ENCODE measurements at regions of chr14 and their contacts with region 1.

Region 1: DNA sequence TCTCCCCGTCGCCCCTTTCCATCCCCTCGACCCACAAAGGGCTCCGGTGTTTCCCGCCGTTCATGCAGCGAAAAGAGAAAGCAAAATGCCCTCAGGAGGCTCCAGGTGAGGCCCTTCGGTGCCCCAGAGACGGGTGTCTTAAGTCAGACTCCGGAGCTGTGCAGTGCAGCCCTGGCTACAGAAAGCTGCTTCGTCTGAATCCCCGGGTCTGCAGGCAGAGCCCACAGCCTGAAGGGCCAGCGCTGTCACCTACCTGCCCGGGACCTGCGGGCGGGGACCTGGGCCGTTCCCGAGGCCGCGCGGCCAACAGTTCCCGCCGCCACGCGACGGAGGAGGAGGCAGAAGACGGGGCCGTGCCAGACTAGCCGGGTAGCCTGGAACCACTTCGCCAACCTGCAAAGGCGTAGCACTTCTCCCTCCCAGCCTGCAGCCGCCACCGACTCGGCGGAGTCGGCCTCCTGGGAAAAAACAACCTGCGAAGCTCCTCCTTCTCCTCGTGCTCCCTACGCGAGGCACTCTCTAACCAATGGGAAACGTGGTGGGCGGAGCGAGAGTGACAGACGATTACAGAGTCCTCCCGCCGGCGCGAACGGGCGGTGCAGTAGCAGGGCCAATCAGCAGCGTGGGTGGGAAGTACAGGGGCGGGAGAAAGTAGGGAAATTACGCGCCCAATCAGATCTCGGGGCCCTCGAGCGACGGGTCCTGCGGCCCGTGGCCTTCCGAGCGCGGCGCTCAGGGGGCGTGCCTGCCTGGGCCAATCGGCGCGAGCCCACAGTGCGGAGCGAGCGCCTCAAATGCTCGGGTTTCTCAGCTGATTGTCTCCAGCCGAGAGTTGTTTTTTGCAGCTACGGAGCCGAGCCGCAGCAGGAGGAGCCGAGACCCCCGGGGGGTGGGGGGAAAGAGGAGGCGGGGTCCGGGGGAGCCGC is at the starts of genes GPR137C and TXNDC16:
- DNase-seq: peak; percentile 100
- H3K4me3 Mint-ChIP-seq: peak within 1 kb of the TSS; percentile 88
- H3K27ac Mint-ChIP-seq: peak within 1 kb of the TSS; percentile 77
- H3K4me1 Mint-ChIP-seq: peaks cover 15% of the 10 kb centered on the region
- H3K27me3 Mint-ChIP-seq: no peaks in the 10 kb centered on the region
- total RNA-seq, gene GPR137C: 0.07 TPM in 1 of 2 experiments, not detected in the other
- total RNA-seq, gene TXNDC16: 4.5 to 4.6 TPM

Region 2: DNA sequence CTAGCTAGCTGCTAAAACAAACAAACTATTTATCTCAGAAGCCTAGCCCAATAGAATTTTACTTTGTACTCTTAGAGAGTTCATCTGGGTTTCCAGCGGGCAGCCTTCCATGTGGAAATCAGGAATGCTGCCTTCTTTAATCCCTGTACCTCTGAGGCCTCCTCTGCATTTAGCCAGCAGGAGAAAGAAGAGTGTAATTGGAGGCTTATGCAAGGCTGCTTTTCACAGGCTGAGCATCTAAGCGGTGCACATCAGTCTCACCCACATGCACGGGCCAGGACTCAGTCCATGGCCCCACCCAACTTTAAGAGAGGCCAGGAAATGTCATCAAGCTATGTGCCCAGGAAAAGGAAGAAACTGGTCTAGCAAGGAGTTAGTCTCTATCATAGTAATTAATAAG is 298.8 kb before region 1 on chr14:
- CTCF ChIA-PET with region 1: no interaction called
- intact Hi-C with region 1: no loop called
- DNase-seq: no peak
- H3K4me3 Mint-ChIP-seq: no peak overlapping the region
- H3K27ac Mint-ChIP-seq: no peak overlapping the region
- H3K4me1 Mint-ChIP-seq: peaks cover 1% of the 10 kb centered on the region
- H3K27me3 Mint-ChIP-seq: peaks cover 6% of the 10 kb centered on the region

Region 3: GRCh38 chr14:52313903-52314594 is 238.3 kb before region 1 on chr14 and contains the start of gene PTGER2:
- CTCF ChIA-PET with region 1: interaction called, 8 read pairs
- intact Hi-C with region 1: loop called (anchors 5 kb)
- DNase-seq: peak; percentile 64
- H3K4me3 Mint-ChIP-seq: peak within 1 kb of the TSS; percentile 93
- H3K27ac Mint-ChIP-seq: peak within 1 kb of the TSS; percentile 79
- H3K4me1 Mint-ChIP-seq: peaks cover 56% of the 10 kb centered on the region
- H3K27me3 Mint-ChIP-seq: peaks cover 19% of the 10 kb centered on the region
- total RNA-seq, gene PTGER2: 0.67 to 1.2 TPM

Region 4: GRCh38 chr14:52602131-52602530 is 49.8 kb after region 1 on chr14:
- CTCF ChIA-PET with region 1: no interaction called
- intact Hi-C with region 1: no loop called
- DNase-seq: no peak
- H3K4me3 Mint-ChIP-seq: no peak overlapping the region
- H3K27ac Mint-ChIP-seq: no peak overlapping the region
- H3K4me1 Mint-ChIP-seq: no peaks in the 10 kb centered on the region
- H3K27me3 Mint-ChIP-seq: peaks cover 4% of the 10 kb centered on the region

Region 5: GRCh38 chr14:52706724-52707706 is 154.7 kb after region 1 on chr14 and contains the start of gene PSMC6:
- CTCF ChIA-PET with region 1: no interaction called
- intact Hi-C with region 1: loop called (anchors 1 kb)
- DNase-seq: peak; percentile 97
- H3K4me3 Mint-ChIP-seq: peak within 1 kb of the TSS; percentile 100
- H3K27ac Mint-ChIP-seq: peak within 1 kb of the TSS; percentile 97
- H3K4me1 Mint-ChIP-seq: peaks cover 47% of the 10 kb centered on the region
- H3K27me3 Mint-ChIP-seq: no peaks in the 10 kb centered on the region
- total RNA-seq, gene PSMC6: 103 to 114 TPM

Region 6: GRCh38 chr14:52791203-52792096 is 239.1 kb after region 1 on chr14 and contains the start of gene GNPNAT1:
- CTCF ChIA-PET with region 1: no interaction called
- intact Hi-C with region 1: loop called (anchors 1 kb)
- DNase-seq: peak; percentile 85
- H3K4me3 Mint-ChIP-seq: peak within 1 kb of the TSS; percentile 94
- H3K27ac Mint-ChIP-seq: peak within 1 kb of the TSS; percentile 66
- H3K4me1 Mint-ChIP-seq: peaks cover 29% of the 10 kb centered on the region
- H3K27me3 Mint-ChIP-seq: no peaks in the 10 kb centered on the region
- total RNA-seq, gene GNPNAT1: 26.1 to 26.9 TPM

Region 7: DNA sequence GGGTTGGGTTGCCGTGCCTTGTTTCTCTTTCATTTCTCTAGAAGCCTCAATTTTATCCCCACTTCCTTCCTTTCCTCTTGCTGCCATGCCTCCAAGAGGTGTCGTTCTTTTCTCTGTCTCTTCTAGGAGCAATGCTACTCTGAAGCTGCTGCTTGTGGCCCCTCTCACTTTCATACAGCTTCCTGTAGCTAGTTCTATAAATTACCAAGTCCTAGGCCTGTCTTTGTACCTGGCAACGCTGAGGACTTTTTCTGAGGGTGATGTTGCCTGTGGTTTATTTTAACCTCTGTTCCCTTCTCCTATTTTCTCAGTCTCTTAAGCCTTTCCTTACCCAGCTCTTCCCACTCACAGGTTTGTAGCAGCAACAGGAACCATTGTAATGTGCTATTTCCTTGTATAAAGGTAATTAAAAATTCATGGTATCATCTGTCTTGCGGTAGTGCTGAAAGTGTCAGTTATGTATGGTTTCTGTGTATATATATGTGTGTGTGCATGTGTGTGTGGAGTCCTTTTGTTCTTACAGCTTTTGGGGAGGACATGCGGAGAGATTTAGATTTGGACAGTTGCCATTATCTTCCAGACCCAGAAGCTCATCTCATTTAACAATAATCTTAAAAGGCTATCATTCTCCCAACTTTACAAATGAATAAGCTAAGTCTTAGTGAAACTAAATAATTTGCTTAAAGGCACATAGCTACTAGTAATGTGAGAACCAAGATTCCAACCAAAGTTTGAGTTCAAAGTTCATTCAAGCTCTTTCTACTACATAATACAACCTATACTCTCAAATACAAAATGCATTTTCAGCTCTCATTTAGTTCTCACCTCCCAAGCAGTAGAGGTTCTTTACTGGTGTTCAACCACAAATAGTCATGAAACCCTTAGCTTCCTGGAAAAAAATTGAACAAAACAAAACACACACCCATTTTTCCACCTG is 557.0 kb after region 1 on chr14:
- CTCF ChIA-PET with region 1: no interaction called
- intact Hi-C with region 1: loop called (anchors 1 kb)
- DNase-seq: peak; percentile 76
- H3K4me3 Mint-ChIP-seq: no peak overlapping the region
- H3K27ac Mint-ChIP-seq: no peak overlapping the region
- H3K4me1 Mint-ChIP-seq: peaks cover 20% of the 10 kb centered on the region
- H3K27me3 Mint-ChIP-seq: no peaks in the 10 kb centered on the region

Region 8: DNA sequence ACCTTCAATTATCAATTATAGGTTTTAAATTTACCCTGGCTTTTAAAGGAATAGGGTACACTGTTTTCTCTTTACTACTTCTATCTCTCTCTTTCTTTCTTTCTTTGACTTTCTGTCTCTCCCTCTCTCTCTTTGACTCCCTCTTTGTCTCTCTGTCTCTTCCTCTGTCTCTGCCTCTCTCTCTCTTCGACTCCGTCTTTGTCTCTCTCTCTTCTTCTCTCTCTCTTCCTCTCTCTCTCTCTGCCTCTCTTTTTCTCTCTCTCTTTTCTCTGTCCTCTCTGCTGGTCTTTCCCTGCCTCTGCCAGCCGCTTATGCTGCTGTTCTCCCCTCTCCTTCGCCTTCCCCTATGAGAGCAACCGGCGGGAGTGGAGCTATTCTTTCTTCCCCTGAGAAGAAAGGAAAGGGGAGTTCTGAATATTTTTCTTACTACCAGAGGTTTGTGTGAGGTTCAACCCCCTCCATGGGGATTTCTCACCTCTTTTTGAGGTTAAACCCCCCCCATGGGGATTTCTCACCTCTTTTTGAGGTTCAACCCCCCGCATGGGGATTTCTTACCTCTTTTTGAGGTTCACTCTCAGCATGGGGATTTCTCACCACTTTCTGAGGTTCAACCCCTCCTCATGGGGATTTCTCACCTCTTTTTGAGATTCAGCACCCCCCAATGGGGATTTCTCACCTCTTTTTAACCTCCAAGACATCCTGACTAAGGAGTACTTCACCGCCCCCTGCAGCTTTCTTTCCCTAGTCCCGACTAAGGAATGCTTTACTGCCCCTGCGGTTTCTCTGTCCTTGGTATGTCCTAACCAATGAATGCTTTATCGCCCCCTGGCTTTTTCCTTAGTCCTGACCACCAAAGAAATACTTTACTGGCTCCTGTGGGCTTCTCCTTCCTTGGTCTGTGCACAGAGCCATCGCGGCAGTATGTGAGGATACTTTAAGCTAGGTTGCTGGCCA is 628.2 kb after region 1 on chr14:
- CTCF ChIA-PET with region 1: no interaction called
- intact Hi-C with region 1: loop called (anchors 5 kb)
- DNase-seq: peak; percentile 86
- H3K4me3 Mint-ChIP-seq: no peak overlapping the region
- H3K27ac Mint-ChIP-seq: peak overlapping the region; percentile 43
- H3K4me1 Mint-ChIP-seq: peaks cover 21% of the 10 kb centered on the region
- H3K27me3 Mint-ChIP-seq: no peaks in the 10 kb centered on the region

Measured in activated naive CD4-positive, alpha-beta T cell treated with anti-CD3 and anti-CD28 coated beads for 36 hours (primary cell).